CD4-positive, alpha-beta T cell (primary cell): ENCODE measurements at regions of chr1 and their contacts with region 1.

Region 1: GRCh38 chr1:11037740-11038182 is 9.3 kb downstream of the MASP2 start:
- DNase-seq: peak; percentile 81 to 94 (median 89)
- ATAC-seq: peak; percentile 100
- H3K4me3 ChIP-seq: no peak overlapping the region
- H3K4me3 Mint-ChIP-seq: no peak overlapping the region
- H3K27ac ChIP-seq: no peak overlapping the region
- H3K27ac Mint-ChIP-seq: no peak overlapping the region
- H3K4me1 ChIP-seq: peaks cover 5% of the 10 kb centered on the region
- H3K4me1 Mint-ChIP-seq: peaks cover 8% of the 10 kb centered on the region
- H3K27me3 ChIP-seq: peaks cover 2 to 5% of the 10 kb centered on the region in 2 experiments
- H3K27me3 Mint-ChIP-seq: peaks cover 6% of the 10 kb centered on the region
- CTCF ChIP-seq: peak; percentile 99

Region 2: GRCh38 chr1:10877894-10878293 is 159.9 kb before region 1 on chr1:
- CTCF ChIA-PET with region 1: no interaction called
- POLR2A ChIA-PET with region 1: no interaction called
- intact Hi-C with region 1: no loop called
- DNase-seq: no peak
- ATAC-seq: no peak
- H3K4me3 ChIP-seq: no peak overlapping the region
- H3K4me3 Mint-ChIP-seq: no peak overlapping the region
- H3K27ac ChIP-seq: no peak overlapping the region
- H3K27ac Mint-ChIP-seq: no peak overlapping the region
- H3K4me1 ChIP-seq: no peaks in the 10 kb centered on the region
- H3K4me1 Mint-ChIP-seq: no peaks in the 10 kb centered on the region
- H3K27me3 ChIP-seq: no peaks in the 10 kb centered on the region
- H3K27me3 Mint-ChIP-seq: no peaks in the 10 kb centered on the region
- CTCF ChIP-seq: no peak

Region 3: GRCh38 chr1:11012250-11013171 is 25.2 kb before region 1 on chr1 and contains the start of gene TARDBP:
- CTCF ChIA-PET with region 1: interaction called, 9 read pairs
- POLR2A ChIA-PET with region 1: interaction called, 16 read pairs
- intact Hi-C with region 1: no loop called
- DNase-seq: peak; percentile 80 to 95 (median 88)
- ATAC-seq: peak; percentile 85
- H3K4me3 ChIP-seq: peak within 1 kb of the TSS; percentile 85
- H3K4me3 Mint-ChIP-seq: peak within 1 kb of the TSS; percentile 94
- H3K27ac ChIP-seq: peak within 1 kb of the TSS; percentile 91 to 99
- H3K27ac Mint-ChIP-seq: peak within 1 kb of the TSS; percentile 98
- H3K4me1 ChIP-seq: peaks cover 44% of the 10 kb centered on the region
- H3K4me1 Mint-ChIP-seq: peaks cover 34% of the 10 kb centered on the region
- H3K27me3 ChIP-seq: no peaks in the 10 kb centered on the region
- H3K27me3 Mint-ChIP-seq: no peaks in the 10 kb centered on the region
- CTCF ChIP-seq: no peak
- total RNA-seq, gene TARDBP: 141 to 149 TPM

Region 4: DNA sequence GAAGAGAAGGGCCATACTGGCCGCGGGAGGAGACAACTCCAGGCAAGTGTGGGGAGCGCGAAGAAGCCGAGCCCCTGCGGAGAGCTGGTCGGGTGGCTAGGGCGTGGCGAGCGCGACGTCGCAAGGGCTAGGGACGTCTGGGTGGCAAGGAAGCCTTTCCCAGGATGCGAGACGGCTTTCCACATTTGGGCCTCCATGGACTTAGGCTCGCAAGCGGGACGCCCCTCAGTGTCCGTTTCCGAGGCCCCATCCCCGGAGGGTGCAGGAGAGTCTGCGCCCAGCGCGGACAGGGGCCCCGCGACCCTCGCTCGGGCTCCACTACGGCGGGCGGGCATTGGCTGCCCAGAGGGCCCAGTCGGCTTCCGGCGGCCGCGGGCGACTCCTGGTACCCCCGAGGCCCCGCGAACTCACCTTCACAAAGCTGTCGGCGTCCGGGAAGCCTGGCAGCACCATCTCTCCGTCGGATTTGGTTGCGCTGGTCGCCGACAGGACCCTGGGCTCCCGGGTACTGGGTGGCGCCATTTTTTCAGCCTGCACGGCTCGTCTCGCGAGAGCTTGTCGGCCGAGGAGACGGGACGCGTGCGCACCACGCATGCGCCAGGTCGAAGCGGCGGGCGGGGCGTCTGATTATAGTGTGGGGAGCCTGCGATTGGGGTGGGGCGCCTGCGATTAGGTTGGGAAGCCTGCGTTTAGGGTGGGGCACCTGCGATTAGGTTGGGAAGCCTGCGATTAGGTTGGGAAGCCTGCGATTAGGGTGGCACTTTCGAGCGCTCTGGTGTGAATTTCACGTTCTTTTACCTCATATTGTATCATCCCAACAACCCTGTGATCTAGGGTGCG is 61.8 kb after region 1 on chr1 and contains the start of gene EXOSC10:
- CTCF ChIA-PET with region 1: interaction called, 13 read pairs
- POLR2A ChIA-PET with region 1: interaction called, 4 read pairs
- intact Hi-C with region 1: loop called in 1 of 2 experiments (anchors 1 kb)
- DNase-seq: peak; percentile 90 to 97 (median 94)
- ATAC-seq: peak; percentile 98
- H3K4me3 ChIP-seq: peak within 1 kb of the TSS; percentile 92
- H3K4me3 Mint-ChIP-seq: peak within 1 kb of the TSS; percentile 99
- H3K27ac ChIP-seq: peak within 1 kb of the TSS; percentile 50 to 66
- H3K27ac Mint-ChIP-seq: peak within 1 kb of the TSS; percentile 93
- H3K4me1 ChIP-seq: peaks cover 12% of the 10 kb centered on the region
- H3K4me1 Mint-ChIP-seq: peaks cover 21% of the 10 kb centered on the region
- H3K27me3 ChIP-seq: no peaks in the 10 kb centered on the region
- H3K27me3 Mint-ChIP-seq: no peaks in the 10 kb centered on the region
- CTCF ChIP-seq: no peak
- total RNA-seq, gene EXOSC10: 81.6 to 89.0 TPM

Region 5: GRCh38 chr1:11207898-11208611 is 170.3 kb after region 1 on chr1:
- CTCF ChIA-PET with region 1: interaction called, 3 read pairs
- POLR2A ChIA-PET with region 1: no interaction called
- intact Hi-C with region 1: loop called in 1 of 2 experiments (anchors 5 kb)
- DNase-seq: no peak
- ATAC-seq: no peak
- H3K4me3 ChIP-seq: no peak overlapping the region
- H3K4me3 Mint-ChIP-seq: no peak overlapping the region
- H3K27ac ChIP-seq: no peak overlapping the region
- H3K27ac Mint-ChIP-seq: no peak overlapping the region
- H3K4me1 ChIP-seq: no peaks in the 10 kb centered on the region
- H3K4me1 Mint-ChIP-seq: no peaks in the 10 kb centered on the region
- H3K27me3 ChIP-seq: no peaks in the 10 kb centered on the region
- H3K27me3 Mint-ChIP-seq: no peaks in the 10 kb centered on the region
- CTCF ChIP-seq: no peak

Region 6: GRCh38 chr1:11337580-11338073 is 299.9 kb after region 1 on chr1:
- CTCF ChIA-PET with region 1: no interaction called
- POLR2A ChIA-PET with region 1: no interaction called
- intact Hi-C with region 1: loop called in 1 of 2 experiments (anchors 5 kb)
- DNase-seq: peak; percentile 55 to 81 (median 66)
- ATAC-seq: peak; percentile 74
- H3K4me3 ChIP-seq: no peak overlapping the region
- H3K4me3 Mint-ChIP-seq: no peak overlapping the region
- H3K27ac ChIP-seq: no peak overlapping the region
- H3K27ac Mint-ChIP-seq: no peak overlapping the region
- H3K4me1 ChIP-seq: peaks cover 5% of the 10 kb centered on the region
- H3K4me1 Mint-ChIP-seq: peaks cover 16% of the 10 kb centered on the region
- H3K27me3 ChIP-seq: peaks cover 0 to 11% of the 10 kb centered on the region in 2 experiments
- H3K27me3 Mint-ChIP-seq: peaks cover 14% of the 10 kb centered on the region
- CTCF ChIP-seq: peak; percentile 86

Region 7: DNA sequence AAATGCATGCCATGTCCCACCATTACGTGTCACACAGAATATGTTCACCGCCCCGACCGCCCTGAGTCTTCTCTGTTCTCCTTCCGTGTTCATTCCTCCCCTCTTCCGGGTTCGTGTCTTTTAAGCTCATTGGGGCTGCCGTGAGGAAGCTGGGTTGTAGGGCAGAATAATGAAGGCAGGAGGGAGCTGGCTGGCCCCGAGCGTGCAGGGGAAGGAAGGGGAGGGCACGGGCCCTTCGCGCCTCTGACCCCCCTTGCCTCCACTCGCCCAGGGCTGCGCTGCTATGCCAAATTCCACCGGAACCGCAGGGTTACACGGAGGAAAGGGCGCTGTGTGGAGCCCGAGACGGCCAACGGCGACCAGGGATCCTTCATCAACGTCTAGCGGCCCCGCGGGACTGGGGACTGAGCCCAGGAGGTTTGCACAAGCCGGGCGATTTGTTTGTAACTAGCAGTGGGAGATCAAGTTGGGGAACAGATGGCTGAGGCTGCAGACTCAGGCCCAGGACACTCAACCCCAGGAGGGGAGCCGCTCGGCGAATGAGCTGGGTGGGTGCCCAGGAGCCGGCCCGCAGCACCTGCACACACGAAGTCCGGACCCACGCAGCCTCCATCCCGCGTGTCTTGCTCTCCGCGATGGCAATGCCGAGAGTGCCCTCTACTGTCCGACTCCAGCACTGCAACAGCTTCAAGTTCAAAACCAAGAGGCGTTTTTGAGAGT is 681.7 kb after region 1 on chr1:
- CTCF ChIA-PET with region 1: interaction called, 9 read pairs
- POLR2A ChIA-PET with region 1: no interaction called
- intact Hi-C with region 1: loop called in 1 of 2 experiments (anchors 1 kb)
- DNase-seq: peak; percentile 80 to 94 (median 88)
- ATAC-seq: peak; percentile 89
- H3K4me3 ChIP-seq: peak overlapping the region; percentile 54
- H3K4me3 Mint-ChIP-seq: peak overlapping the region; percentile 86
- H3K27ac ChIP-seq: peak overlapping the region; percentile 15 to 64
- H3K27ac Mint-ChIP-seq: peak overlapping the region; percentile 86
- H3K4me1 ChIP-seq: peaks cover 18% of the 10 kb centered on the region
- H3K4me1 Mint-ChIP-seq: peaks cover 17% of the 10 kb centered on the region
- H3K27me3 ChIP-seq: no peaks in the 10 kb centered on the region
- H3K27me3 Mint-ChIP-seq: no peaks in the 10 kb centered on the region
- CTCF ChIP-seq: peak; percentile 96

Region 8: GRCh38 chr1:11822096-11822495 is 784.3 kb after region 1 on chr1:
- CTCF ChIA-PET with region 1: no interaction called
- POLR2A ChIA-PET with region 1: no interaction called
- intact Hi-C with region 1: no loop called
- DNase-seq: no peak
- ATAC-seq: no peak
- H3K4me3 ChIP-seq: no peak overlapping the region
- H3K4me3 Mint-ChIP-seq: no peak overlapping the region
- H3K27ac ChIP-seq: no peak overlapping the region
- H3K27ac Mint-ChIP-seq: no peak overlapping the region
- H3K4me1 ChIP-seq: no peaks in the 10 kb centered on the region
- H3K4me1 Mint-ChIP-seq: no peaks in the 10 kb centered on the region
- H3K27me3 ChIP-seq: no peaks in the 10 kb centered on the region
- H3K27me3 Mint-ChIP-seq: no peaks in the 10 kb centered on the region
- CTCF ChIP-seq: no peak